CD4-positive, alpha-beta memory T cell (primary cell): ENCODE measurements at regions of chr11 and their contacts with region 1.

Region 1: DNA sequence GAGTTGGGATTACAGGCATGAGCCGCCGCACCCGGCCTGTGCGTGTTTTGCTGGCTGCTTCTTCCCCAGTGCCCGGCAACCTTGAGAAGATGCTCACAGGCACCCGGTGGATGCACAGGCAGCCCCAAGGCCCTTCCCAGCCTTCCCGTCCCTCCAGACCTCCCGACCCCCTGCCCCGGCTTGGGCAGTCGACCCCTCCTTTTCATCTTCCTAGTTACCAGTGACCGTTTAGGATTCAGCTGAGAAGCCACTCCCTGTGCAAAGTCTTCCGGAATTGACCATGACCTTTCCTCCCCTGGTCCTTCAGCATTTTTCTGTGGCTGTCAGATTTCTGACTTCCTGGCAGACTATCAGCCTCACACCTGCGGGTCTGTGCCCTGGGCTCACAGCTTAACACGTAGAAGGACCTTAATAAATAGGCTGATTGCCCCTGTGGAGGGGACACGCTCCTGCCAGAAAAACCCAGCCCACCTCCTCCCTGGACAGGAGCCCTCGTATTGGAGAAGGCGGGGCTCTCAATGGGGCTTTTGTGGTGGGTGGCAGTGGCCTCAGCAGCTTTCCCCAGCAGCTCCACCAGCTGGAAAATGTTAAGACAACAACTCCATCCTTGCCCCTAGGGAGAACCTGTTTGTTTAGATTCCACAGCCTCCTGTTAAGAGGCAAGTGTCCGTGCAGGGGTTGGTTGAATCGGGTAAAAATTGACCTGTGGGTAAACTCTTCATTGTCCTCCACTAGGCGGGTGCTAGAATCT is 10.4 kb upstream of the ANO1 start:
- DNase-seq: no peak
- H3K4me3 ChIP-seq: no peak overlapping the region
- H3K4me3 Mint-ChIP-seq: no peak overlapping the region
- H3K27ac ChIP-seq: no peak overlapping the region
- H3K27ac Mint-ChIP-seq: no peak overlapping the region
- H3K4me1 ChIP-seq: no peaks in the 10 kb centered on the region
- H3K4me1 Mint-ChIP-seq: no peaks in the 10 kb centered on the region
- H3K27me3 ChIP-seq: peaks cover 8% of the 10 kb centered on the region
- H3K27me3 Mint-ChIP-seq: peaks cover 37 to 42% of the 10 kb centered on the region in 2 donors

Region 2: GRCh38 chr11:70167728-70168404 is 100.1 kb after region 1 on chr11:
- CTCF ChIA-PET with region 1: no interaction called
- POLR2A ChIA-PET with region 1: no interaction called
- intact Hi-C with region 1: no loop called
- DNase-seq: no peak
- H3K4me3 ChIP-seq: no peak overlapping the region
- H3K4me3 Mint-ChIP-seq: no peak overlapping the region
- H3K27ac ChIP-seq: no peak overlapping the region
- H3K27ac Mint-ChIP-seq: no peak overlapping the region
- H3K4me1 ChIP-seq: no peaks in the 10 kb centered on the region
- H3K4me1 Mint-ChIP-seq: no peaks in the 10 kb centered on the region
- H3K27me3 ChIP-seq: no peaks in the 10 kb centered on the region
- H3K27me3 Mint-ChIP-seq: peaks cover 10 to 15% of the 10 kb centered on the region in 2 donors

Region 3: GRCh38 chr11:70183483-70184169 is 115.9 kb after region 1 on chr11:
- CTCF ChIA-PET with region 1: no interaction called
- POLR2A ChIA-PET with region 1: no interaction called
- intact Hi-C with region 1: loop called (anchors 10 kb)
- DNase-seq: no peak
- H3K4me3 ChIP-seq: no peak overlapping the region
- H3K4me3 Mint-ChIP-seq: no peak overlapping the region
- H3K27ac ChIP-seq: no peak overlapping the region
- H3K27ac Mint-ChIP-seq: no peak overlapping the region
- H3K4me1 ChIP-seq: no peaks in the 10 kb centered on the region
- H3K4me1 Mint-ChIP-seq: no peaks in the 10 kb centered on the region
- H3K27me3 ChIP-seq: no peaks in the 10 kb centered on the region
- H3K27me3 Mint-ChIP-seq: peaks cover 3% of the 10 kb centered on the region in 2 donors